AG04449 (cell line): ENCODE measurements at regions of chr1 and their contacts with region 1.

Region 1: GRCh38 chr1:27556781-27557595 is 47.0 kb downstream of the AHDC1 start:
- DNase-seq: peak; percentile 76
- H3K4me3 ChIP-seq: peak overlapping the region; percentile 29; the same call in 1 of the 2 replicates
- CTCF ChIP-seq: peak; percentile 88

Region 2: GRCh38 chr1:27416387-27417111 is 140.4 kb before region 1 on chr1:
- CTCF ChIA-PET with region 1: interaction called, 31 read pairs
- POLR2A ChIA-PET with region 1: no interaction called
- DNase-seq: no peak
- H3K4me3 ChIP-seq: no peak overlapping the region
- CTCF ChIP-seq: peak; percentile 61

Region 3: DNA sequence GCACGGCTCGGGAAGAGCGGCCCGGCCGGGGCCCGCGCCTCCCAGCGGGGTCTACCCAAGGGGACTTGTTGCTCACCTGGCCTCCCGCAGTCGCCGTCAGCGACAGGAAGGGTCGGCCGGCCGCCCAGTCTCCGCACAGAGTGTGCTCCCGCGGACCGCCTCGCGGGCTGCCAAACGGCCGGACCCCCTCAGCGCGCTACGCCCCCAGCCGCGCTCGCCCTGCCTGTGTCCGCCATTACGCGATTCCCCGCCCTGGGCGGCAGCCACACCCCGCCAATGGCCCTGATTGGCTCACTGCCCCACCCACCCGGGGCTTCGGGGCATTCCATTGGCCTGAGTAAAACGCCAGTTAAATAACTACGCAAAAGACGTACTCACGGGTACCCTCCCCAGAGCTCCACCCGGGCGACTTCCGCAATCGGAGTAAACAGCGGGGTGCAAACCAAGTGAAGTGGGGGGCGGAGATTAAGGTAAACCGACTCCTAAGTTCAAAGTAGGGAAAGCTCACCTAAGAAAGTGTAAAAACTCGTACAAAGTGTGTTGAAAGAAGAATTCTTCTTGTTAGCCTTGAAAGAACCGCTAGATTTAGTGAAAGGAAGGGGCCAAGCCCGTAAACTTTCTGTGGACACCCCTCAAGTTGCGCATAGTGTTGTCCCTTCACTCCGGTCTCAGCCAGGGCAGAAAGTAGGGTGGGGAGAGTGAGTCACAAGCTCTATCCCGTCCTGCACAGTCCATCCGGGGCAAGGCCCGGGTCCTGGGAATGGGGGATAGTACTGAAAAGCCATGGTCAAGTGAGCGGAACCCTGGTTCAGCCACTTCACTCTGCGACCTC is 66.9 kb before region 1 on chr1 and contains the start of gene WASF2:
- CTCF ChIA-PET with region 1: interaction called, 14 read pairs
- POLR2A ChIA-PET with region 1: no interaction called
- DNase-seq: peak; percentile 83
- H3K4me3 ChIP-seq: peak within 1 kb of the TSS; percentile 72
- CTCF ChIP-seq: no peak

Region 4: DNA sequence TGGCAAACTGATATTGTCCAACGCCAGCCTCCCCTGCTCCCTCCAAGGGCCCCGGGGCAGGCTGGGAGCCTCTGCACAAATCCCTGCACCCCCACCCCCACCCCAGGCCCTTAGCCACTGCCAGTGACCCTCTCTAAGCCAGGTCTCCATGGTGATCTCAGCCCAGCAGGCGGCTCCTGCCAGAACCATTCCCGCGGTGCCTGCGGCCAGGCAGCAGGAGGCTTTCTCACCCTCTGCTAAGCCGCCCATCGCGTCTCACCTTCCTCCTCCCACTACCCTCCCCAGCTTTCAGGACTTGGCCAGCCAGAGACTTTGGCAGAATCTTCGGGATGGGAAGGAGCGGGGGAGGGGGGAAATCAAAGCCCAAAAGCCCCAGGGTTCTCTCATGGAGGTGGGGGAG is 20.2 kb before region 1 on chr1:
- CTCF ChIA-PET with region 1: interaction called, 220 read pairs
- POLR2A ChIA-PET with region 1: interaction called, 3 read pairs
- DNase-seq: no peak
- H3K4me3 ChIP-seq: no peak overlapping the region; the same call in 1 of the 2 replicates
- CTCF ChIP-seq: no peak

Region 5: GRCh38 chr1:27574871-27575831 is 18.2 kb after region 1 on chr1:
- CTCF ChIA-PET with region 1: interaction called, 219 read pairs
- POLR2A ChIA-PET with region 1: interaction called, 3 read pairs
- DNase-seq: no peak
- H3K4me3 ChIP-seq: peak overlapping the region; percentile 34
- CTCF ChIP-seq: peak; percentile 37

Region 6: DNA sequence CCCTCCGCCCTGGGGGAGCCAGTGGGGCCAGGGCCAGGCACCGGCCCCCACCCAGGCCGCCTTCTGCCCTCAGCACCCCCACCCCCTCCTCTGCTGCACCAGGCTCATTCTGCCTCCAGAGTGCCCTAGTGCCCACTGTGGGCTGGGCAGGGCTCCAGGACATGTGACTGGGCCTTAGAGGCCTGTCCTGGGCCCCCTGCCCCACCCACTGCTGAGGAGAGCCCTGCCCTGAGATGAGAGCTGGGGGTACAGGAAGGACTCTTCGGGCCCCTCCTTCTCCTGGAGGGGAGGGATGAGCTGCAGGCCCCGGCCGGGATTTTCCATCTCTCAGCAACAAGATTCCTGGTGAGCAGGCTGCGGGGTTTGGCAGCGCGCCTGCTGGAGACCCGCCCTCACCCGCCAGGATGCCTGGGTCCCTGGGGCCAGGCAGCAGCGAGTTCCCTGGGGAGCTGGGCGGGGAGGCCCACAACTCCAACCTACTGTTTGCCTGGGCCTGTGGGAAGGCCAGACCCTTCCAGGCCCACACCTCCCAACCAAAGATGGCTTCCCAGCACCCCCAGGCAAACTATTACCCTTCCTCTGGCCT is 32.9 kb after region 1 on chr1:
- CTCF ChIA-PET with region 1: interaction called, 689 read pairs
- POLR2A ChIA-PET with region 1: interaction called, 13 read pairs
- DNase-seq: no peak
- H3K4me3 ChIP-seq: no peak overlapping the region
- CTCF ChIP-seq: no peak

Region 7: DNA sequence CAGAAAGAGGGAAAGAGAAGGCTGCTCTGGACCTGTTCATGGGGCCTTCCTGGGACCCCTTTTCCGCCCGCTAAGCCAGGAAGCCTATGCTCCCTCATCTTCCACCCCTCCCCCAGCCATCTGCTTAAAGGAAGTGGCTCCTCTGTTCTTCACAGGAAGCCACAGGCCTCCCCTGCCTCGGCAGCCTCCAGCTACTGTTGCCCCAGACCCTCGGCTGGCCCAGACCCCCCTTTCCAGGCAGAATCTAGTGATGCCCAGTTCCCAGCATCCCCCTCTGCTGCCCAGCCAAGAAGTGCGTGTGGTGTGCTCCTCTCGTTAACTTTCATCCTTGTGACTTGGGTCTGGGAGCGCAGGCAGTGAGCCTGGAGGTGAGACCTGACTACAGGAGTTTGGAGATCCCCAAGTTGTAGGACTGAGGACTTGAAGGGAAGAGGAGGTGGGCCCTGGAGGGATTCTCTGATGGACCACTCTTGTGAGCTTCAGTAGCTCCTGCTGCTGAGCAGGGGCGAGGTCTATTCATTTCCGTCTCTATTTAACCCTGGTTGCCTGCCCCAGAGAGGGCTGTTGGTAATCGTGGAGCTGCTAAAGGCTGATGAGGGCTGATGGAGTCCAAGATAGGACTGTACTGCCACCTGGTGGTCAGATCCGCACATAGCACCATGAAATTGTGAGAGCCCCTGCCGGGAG is 105.9 kb after region 1 on chr1:
- CTCF ChIA-PET with region 1: interaction called, 58 read pairs
- POLR2A ChIA-PET with region 1: no interaction called
- DNase-seq: no peak
- H3K4me3 ChIP-seq: no peak overlapping the region
- CTCF ChIP-seq: peak; percentile 79